ENCODE measurements at regions of chr1 and their contacts with region 1.

Region 1: GRCh38 chr1:114093624-114094376 is 59.9 kb downstream of the SYT6 start:
- DNase-seq: peak; percentile 86
- H3K4me3 ChIP-seq: no peak overlapping the region
- H3K27ac ChIP-seq: peak overlapping the region; percentile 36
- H3K4me1 ChIP-seq: peaks cover 34% of the 10 kb centered on the region
- H3K27me3 ChIP-seq: no peaks in the 10 kb centered on the region
- CTCF ChIP-seq: peak; percentile 38 to 70

Region 2: GRCh38 chr1:114002492-114003239 is 91.1 kb before region 1 on chr1:
- CTCF ChIA-PET with region 1: no interaction called
- dilution Hi-C with region 1: no loop called
- in situ Hi-C with region 1: no loop called
- intact Hi-C with region 1: loop called (anchors 5 kb)
- DNase-seq: no peak
- H3K4me3 ChIP-seq: no peak overlapping the region
- H3K27ac ChIP-seq: no peak overlapping the region
- H3K4me1 ChIP-seq: no peaks in the 10 kb centered on the region
- H3K27me3 ChIP-seq: peaks cover 3% of the 10 kb centered on the region
- CTCF ChIP-seq: no peak

Region 3: GRCh38 chr1:114013219-114013618 is 80.6 kb before region 1 on chr1:
- CTCF ChIA-PET with region 1: no interaction called
- dilution Hi-C with region 1: no loop called
- in situ Hi-C with region 1: no loop called
- intact Hi-C with region 1: no loop called
- DNase-seq: no peak
- H3K4me3 ChIP-seq: no peak overlapping the region
- H3K27ac ChIP-seq: no peak overlapping the region
- H3K4me1 ChIP-seq: peaks cover 20% of the 10 kb centered on the region
- H3K27me3 ChIP-seq: peaks cover 3% of the 10 kb centered on the region
- CTCF ChIP-seq: no peak

Region 4: DNA sequence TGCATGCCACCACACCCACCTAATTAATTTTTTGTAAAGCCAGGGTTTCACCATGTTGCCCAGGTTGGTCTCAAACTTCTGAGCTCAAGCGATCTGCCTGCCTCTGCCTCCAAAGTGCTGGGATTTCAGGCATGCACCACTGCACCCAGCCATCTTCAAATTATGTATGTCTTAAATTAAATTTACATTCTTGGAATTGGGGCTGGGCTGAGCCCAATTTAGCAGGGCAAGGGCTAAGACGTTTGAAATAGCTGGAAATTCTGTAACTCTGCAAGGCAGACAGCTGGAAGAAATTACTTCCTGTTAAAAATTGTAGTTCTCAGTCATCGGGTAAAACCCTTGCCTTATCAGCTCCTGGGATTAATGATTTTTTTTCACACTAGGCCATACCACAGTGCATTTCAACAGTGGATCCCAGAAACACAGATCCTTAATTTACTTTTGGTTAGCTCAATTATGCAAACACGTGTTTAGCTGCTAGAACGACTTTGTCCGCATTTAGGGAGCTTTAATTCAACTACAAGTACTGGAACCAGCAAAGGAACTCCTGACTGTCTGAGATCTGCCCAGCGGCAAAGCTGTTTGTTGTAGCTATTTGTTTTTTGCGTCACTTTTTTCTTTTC is 31.2 kb before region 1 on chr1:
- CTCF ChIA-PET with region 1: no interaction called
- dilution Hi-C with region 1: loop called (anchors 5 kb)
- in situ Hi-C with region 1: no loop called
- intact Hi-C with region 1: no loop called
- DNase-seq: no peak
- H3K4me3 ChIP-seq: no peak overlapping the region
- H3K27ac ChIP-seq: no peak overlapping the region
- H3K4me1 ChIP-seq: no peaks in the 10 kb centered on the region
- H3K27me3 ChIP-seq: no peaks in the 10 kb centered on the region
- CTCF ChIP-seq: no peak

Region 5: DNA sequence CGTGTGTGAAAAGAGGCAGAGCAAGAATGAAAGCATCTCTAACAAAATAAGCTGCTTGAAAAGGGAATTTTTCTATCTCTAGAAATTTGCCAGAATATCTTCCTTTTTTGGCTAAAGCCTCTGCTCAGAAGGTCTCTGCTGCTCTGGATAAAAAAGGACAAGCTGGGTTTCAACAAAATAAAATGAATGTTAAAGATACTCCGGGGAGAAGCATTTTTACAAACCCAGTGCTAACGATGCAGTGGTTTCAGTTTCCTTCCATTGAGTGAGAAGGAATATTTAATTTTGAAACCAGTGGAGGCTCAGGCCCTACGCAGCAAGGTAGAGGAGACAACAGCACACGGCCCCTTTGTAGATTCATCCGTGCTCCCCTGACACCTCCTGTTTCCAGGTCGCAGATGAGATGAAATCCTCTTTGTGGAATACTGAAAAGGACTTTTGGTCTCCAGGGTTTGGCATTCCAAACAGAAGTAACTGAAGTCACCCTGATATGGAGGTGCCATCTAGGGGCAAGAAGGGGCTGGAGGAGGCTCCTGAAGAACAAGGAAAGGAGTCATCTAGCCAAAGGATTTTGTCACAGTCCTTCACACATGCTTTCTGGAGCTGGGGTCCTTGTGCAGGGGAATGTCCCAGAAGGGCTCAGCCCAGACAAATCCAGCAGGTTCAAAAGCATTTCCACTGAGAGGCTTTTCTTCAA is 125.5 kb after region 1 on chr1:
- CTCF ChIA-PET with region 1: no interaction called
- dilution Hi-C with region 1: no loop called
- in situ Hi-C with region 1: no loop called
- intact Hi-C with region 1: loop called (anchors 1 kb)
- DNase-seq: no peak
- H3K4me3 ChIP-seq: no peak overlapping the region
- H3K27ac ChIP-seq: no peak overlapping the region
- H3K4me1 ChIP-seq: no peaks in the 10 kb centered on the region
- H3K27me3 ChIP-seq: peaks cover 2% of the 10 kb centered on the region
- CTCF ChIP-seq: peak in 1 of 2 donors; percentile 42

Region 6: GRCh38 chr1:114282751-114283403 is 189.1 kb after region 1 on chr1:
- CTCF ChIA-PET with region 1: no interaction called
- dilution Hi-C with region 1: no loop called
- in situ Hi-C with region 1: no loop called
- intact Hi-C with region 1: loop called (anchors 1 kb)
- DNase-seq: peak; percentile 64
- H3K4me3 ChIP-seq: no peak overlapping the region
- H3K27ac ChIP-seq: no peak overlapping the region
- H3K4me1 ChIP-seq: no peaks in the 10 kb centered on the region
- H3K27me3 ChIP-seq: no peaks in the 10 kb centered on the region
- CTCF ChIP-seq: peak; percentile 85 to 93